Astrocyte of the cerebellum (primary cell): ENCODE measurements at regions of chr6 and their contacts with region 1.

Region 1: GRCh38 chr6:144384427-144384826 is 99.3 kb downstream of the UTRN start:
- DNase-seq: no peak
- H3K4me3 ChIP-seq: no peak overlapping the region
- CTCF ChIP-seq: no peak

Region 2: GRCh38 chr6:144423167-144423566 is 38.7 kb after region 1 on chr6:
- in situ Hi-C with region 1: loop called (anchors 5 kb)
- DNase-seq: no peak
- H3K4me3 ChIP-seq: no peak overlapping the region
- CTCF ChIP-seq: no peak

Region 3: DNA sequence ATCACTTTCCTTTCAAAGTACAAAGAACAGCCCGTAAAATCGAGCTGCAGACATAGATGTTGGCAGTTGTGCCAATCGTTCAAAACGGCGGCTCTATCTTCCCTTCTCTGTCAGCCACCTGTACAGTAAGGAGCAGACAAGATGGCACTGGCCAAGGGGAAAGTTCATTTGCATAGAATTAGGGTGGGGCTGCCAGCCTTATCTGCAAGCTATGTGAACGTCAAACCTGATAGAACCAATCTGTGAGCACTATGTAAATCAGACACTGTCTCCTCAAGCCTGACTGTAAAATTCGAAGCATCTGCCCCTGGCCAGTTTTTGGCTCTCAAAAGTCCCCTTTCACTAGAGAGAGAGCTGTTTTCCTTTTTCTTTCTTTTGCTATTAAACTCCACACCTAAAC is 976.4 kb after region 1 on chr6:
- in situ Hi-C with region 1: no loop called
- DNase-seq: no peak
- H3K4me3 ChIP-seq: no peak overlapping the region
- CTCF ChIP-seq: no peak